ENCODE measurements at regions of chr2 and their contacts with region 1.

Region 1: DNA sequence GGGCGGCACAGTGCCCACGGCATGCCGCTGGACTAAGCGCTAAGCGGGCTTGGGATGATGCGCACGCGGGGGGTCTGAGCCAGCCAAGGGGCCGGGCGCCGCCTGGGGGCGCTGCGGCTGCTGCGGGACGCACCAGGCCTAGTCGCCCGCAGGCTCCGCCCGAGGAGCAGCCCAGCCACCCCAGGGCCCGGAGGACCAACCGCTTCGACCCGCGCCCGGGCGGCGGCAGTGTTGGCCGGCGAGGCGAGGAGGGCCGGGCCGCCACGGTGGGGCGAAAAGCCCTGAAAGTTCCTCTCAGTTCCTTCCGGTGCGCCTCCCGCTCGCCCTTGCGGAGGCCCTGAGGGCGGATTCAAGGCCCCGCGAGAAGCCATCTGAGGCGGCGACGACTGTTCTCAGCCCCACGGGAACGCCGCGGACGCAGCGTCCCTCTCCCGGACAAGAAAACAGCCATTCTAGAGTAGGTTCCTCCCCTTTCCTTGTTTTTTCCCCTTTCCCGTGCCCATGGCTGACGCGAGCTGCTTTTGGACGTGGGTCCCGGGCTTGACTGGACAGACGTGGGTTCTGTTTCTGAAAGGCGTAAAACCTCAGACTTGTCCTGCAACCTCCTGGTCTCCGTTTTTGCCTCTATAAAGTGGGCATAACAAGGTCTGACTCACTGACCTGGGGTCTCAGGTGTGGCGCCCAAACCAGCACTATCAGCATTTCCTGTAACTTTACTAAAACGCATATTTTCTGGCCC is at the start of gene ANKAR:
- DNase-seq: peak; percentile 90
- ATAC-seq: peak; percentile 99
- H3K4me3 ChIP-seq: peak within 1 kb of the TSS; percentile 69
- H3K27ac ChIP-seq: peak within 1 kb of the TSS; percentile 84
- H3K4me1 ChIP-seq: 0 out of 2 replicates have a peak, but pooled peaks cover 2% of the 10 kb centered on the region
- H3K27me3 ChIP-seq: no peaks in the 10 kb centered on the region
- CTCF ChIP-seq: peak; percentile 94
- POLR2A ChIP-seq: peak; percentile 74
- RAD21 ChIP-seq: peak; percentile 54
- total RNA-seq, gene ANKAR: 2.2 and 4.4 TPM in 2 replicates

Region 2: DNA sequence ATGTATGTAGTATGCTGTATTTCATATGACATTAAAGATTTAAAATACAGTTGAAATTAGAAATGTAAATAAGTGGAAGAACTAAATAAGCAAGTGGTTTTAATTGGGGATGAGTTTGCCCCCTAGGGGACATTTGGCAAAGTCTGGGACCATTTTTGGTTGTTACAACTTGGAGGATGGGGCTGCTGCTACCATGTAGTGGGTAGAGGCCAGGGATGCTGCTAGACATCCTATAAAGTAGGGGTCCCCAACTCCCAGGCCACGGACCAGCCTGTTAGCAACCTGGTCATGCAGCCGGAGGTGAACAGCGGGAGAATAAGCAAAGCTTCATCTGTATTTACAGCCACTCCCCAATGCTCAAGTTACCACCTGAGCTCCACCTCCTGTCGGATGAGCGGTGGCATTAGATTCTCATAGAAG is 41.1 kb before region 1 on chr2:
- CTCF ChIA-PET with region 1: no interaction called
- POLR2A ChIA-PET with region 1: no interaction called
- dilution Hi-C with region 1: no loop called
- in situ Hi-C with region 1: no loop called
- intact Hi-C with region 1: no loop called
- DNase-seq: no peak
- ATAC-seq: no peak
- H3K4me3 ChIP-seq: no peak overlapping the region
- H3K27ac ChIP-seq: no peak overlapping the region
- H3K4me1 ChIP-seq: peaks cover 8% of the 10 kb centered on the region
- H3K27me3 ChIP-seq: no peaks in the 10 kb centered on the region
- CTCF ChIP-seq: peak; percentile 41
- POLR2A ChIP-seq: no peak
- RAD21 ChIP-seq: peak; percentile 27; the same call in 1 of the 2 replicates

Region 3: DNA sequence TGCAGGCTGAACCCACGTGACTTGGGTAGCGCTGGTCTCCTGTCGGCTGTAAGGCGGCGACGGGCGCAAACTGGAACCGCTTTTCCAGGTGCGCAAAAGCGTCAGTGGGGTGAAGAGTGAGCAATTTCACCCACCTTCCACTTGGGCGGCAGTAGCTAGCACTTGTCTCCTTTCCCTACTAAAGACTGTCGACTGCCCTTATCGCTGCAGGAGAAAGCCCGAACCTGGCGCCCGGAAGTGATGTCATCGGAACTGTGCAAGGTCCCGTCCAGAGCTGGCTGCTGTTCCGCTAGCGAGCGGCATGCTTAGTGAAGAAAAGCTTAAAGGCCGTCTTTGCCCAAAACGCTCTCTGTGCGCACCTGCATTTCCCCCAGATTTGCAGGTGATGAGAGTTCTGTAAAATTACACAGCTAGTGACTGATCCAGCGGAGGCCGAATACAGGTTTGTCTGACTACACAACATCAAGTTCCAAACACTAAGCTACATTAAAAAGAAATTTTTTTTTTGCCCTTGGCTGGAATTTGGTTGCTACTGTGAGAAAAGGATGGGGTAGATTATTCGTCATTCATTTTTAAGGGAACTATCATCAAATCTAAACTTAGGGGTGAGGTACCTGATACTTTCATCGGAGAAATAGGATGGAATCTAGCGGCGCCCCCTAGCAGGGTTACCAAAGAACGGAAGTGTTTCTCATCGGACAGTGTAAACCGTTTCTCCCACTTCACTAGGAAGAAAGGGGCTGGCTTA is 88.2 kb after region 1 on chr2 and contains the start of gene OSGEPL1:
- CTCF ChIA-PET with region 1: interaction called, 5 read pairs
- POLR2A ChIA-PET with region 1: no interaction called
- dilution Hi-C with region 1: no loop called
- in situ Hi-C with region 1: no loop called
- intact Hi-C with region 1: loop called (anchors 1 kb)
- DNase-seq: peak; percentile 90
- ATAC-seq: peak; percentile 95
- H3K4me3 ChIP-seq: peak within 1 kb of the TSS; percentile 69
- H3K27ac ChIP-seq: peak within 1 kb of the TSS; percentile 72
- H3K4me1 ChIP-seq: no peaks in the 10 kb centered on the region
- H3K27me3 ChIP-seq: no peaks in the 10 kb centered on the region
- CTCF ChIP-seq: peak; percentile 61
- POLR2A ChIP-seq: 0 out of 2 replicates have a peak, but pooled peaks have one; percentile 26
- RAD21 ChIP-seq: no peak; the same call in 1 of the 2 replicates
- total RNA-seq, gene OSGEPL1: 6.8 and 8.3 TPM in 2 replicates

Region 4: DNA sequence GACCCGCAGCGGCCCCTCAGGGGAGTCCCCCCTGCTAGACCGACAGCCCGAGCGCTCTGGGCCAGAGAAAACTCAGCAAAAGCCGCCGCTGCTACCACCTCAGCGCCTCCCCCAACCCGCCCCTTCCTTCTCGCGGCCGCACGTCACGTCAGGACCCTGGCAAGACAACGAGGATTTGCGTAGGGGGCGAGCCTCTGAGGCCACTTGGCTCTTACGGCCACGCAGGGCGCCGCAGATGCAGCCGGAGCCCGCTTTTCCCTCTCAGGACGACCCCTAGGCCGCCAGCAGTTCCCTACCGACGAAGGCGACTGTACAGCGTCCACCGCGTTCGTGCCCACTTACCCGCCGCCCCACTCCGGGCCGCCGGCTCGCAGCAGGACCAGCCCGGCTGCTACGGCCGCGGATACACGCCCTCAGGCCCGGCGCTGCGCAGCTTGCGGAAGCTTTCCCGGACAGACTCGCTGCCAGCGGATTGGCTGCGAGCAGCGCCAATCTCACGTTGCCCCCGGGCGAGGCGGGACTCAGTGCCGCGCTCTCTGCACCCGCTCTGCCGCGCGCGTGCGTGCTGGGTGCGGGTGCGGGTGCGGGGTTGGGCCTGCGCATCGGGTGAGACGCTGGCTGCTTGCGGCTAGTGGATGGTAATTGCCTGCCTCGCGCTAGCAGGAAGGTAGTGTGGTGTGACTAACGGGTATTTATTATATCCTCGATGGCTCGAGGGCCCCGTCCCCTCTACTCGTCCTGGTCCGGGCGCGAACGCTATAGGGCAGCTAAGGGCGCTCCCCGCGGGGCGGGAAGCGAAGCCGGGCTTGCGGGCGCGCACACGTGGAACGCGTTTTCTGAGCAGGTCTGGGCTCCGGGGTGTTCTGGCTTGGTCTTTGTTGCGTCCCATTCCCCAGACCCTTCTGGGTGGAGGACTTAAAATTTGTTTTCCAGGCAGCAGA is 109.7 kb after region 1 on chr2 and contains the starts of genes ORMDL1 and PMS1:
- CTCF ChIA-PET with region 1: no interaction called
- POLR2A ChIA-PET with region 1: no interaction called
- dilution Hi-C with region 1: no loop called
- in situ Hi-C with region 1: no loop called
- intact Hi-C with region 1: loop called (anchors 1 kb)
- DNase-seq: peak; percentile 95
- ATAC-seq: peak; percentile 98
- H3K4me3 ChIP-seq: peak within 1 kb of the TSS; percentile 80
- H3K27ac ChIP-seq: peak within 1 kb of the TSS; percentile 89
- H3K4me1 ChIP-seq: peaks cover 4% of the 10 kb centered on the region; the same call in 1 of the 2 replicates
- H3K27me3 ChIP-seq: no peaks in the 10 kb centered on the region
- CTCF ChIP-seq: no peak
- POLR2A ChIP-seq: peak; percentile 90
- RAD21 ChIP-seq: no peak
- total RNA-seq, gene ORMDL1: 35.8 and 39.2 TPM in 2 replicates
- total RNA-seq, gene PMS1: 10.6 and 20.0 TPM in 2 replicates